PC-3 (cell line): ENCODE measurements at regions of chr20 and their contacts with region 1.

Region 1: DNA sequence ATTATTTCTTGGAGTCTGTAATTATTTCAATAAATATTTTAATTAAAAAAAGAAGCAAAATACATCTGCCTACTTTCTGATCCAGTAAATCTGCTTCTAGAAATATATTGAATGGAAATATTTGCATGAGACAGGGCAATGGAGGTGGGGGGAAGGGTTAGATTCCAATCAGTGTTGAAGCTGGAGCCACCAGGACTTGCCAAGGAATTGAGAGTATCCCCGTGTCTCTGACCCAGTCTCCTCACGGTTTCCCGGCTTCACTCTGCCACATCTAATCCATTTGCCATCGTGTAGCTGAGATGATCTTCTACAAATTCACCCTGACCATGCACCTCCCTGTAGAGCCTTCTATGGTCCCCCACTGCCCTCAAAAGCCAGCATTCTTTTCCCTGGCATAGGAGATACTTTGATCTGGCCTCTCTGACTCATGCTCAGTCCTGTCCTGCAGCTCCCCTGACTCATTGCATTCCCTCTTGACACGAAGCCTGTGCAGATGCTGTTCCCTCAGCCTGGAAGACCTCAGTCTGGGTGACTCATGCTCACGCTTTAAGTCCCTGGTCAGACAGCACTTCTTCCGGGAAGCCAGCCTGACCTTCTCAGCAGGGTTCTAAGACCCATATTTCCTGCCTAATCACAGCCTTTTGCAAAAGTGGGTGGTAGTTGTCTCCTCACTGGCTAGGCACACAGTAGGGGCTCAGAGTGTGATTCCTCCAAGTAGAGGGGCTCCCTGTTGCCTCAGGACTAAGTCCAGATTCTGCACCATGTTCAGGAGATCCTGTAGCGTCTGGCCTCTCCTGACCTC is 23.0 kb upstream of the FKBP1A start:
- DNase-seq: peak; percentile 99
- ATAC-seq: peak; percentile 83
- H3K4me3 ChIP-seq: peak overlapping the region; percentile 55; the same call in 1 of the 2 replicates
- H3K27ac ChIP-seq: peak overlapping the region; percentile 81
- H3K4me1 ChIP-seq: peaks cover 54% of the 10 kb centered on the region
- H3K27me3 ChIP-seq: no peaks in the 10 kb centered on the region
- CTCF ChIP-seq: no peak

Region 2: DNA sequence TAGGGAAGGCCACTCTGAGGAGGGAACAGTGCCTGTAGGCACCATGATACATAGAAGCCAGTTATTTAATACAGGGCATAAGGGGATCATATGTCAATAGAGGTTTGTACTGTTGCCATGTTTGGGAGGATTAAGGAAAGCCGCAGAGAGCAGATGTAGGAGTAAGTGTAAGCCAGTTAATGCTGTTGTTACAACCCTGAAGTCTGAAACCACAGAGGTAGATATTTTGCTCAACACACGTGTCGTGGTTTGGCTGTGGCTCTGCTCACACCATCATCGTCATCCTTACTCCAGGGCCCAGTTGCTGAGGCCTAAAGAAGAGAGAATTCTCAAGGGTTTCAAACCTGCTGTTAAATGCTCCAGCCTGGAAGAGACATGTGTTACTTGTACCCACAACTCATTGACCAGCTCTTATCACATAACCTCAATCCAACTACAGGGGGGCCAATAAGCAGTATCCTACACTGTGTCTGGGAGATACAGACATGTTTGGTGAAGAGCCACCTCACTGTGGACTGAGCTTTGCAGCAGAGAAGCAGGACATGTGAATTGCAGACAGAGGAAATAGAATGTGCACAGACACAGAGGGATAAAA is 328.5 kb before region 1 on chr20:
- CTCF ChIA-PET with region 1: no interaction called
- POLR2A ChIA-PET with region 1: no interaction called
- intact Hi-C with region 1: no loop called
- DNase-seq: no peak
- ATAC-seq: no peak
- H3K4me3 ChIP-seq: no peak overlapping the region
- H3K27ac ChIP-seq: no peak overlapping the region
- H3K4me1 ChIP-seq: no peaks in the 10 kb centered on the region
- H3K27me3 ChIP-seq: no peaks in the 10 kb centered on the region
- CTCF ChIP-seq: no peak

Region 3: GRCh38 chr20:1381753-1382591 is 33.9 kb before region 1 on chr20:
- CTCF ChIA-PET with region 1: no interaction called
- POLR2A ChIA-PET with region 1: no interaction called
- intact Hi-C with region 1: loop called (anchors 5 kb)
- DNase-seq: no peak
- ATAC-seq: no peak
- H3K4me3 ChIP-seq: no peak overlapping the region
- H3K27ac ChIP-seq: 0 out of 2 replicates have a peak overlapping the region, but pooled peaks have one; percentile 1
- H3K4me1 ChIP-seq: peaks cover 82% of the 10 kb centered on the region
- H3K27me3 ChIP-seq: no peaks in the 10 kb centered on the region
- CTCF ChIP-seq: no peak

Region 4: DNA sequence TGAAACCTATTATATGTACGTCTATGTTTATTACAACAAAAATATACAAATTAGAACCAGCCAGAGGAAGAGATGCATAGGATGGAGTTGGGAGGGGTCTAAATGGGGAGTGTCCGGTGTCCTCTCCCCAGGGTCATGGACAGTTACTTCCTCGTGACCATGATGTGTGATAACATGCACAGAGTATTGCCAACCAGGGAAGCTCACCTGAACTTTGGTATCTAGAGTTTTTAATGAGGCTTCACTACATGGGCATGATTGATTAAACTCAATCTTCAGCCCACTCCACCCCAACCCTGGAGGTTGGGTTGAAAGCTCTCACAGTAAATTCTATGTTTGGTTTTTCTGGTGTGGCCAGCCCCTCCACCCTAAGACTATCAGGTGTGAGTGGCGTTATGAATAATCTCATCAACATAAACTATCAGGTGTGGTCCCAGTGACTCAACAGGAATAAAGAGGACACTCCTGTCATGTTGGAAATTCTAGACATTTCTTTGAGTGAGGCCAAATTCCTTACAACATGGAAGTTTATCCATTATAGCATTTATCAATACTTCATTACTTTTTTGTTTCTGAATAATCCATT is 13.4 kb after region 1 on chr20:
- CTCF ChIA-PET with region 1: interaction called, 3 read pairs
- POLR2A ChIA-PET with region 1: no interaction called
- intact Hi-C with region 1: loop called (anchors 1 kb)
- DNase-seq: peak; percentile 55
- ATAC-seq: peak; percentile 69
- H3K4me3 ChIP-seq: no peak overlapping the region
- H3K27ac ChIP-seq: peak overlapping the region; percentile 15; the same call in 1 of the 2 replicates
- H3K4me1 ChIP-seq: peaks cover 21% of the 10 kb centered on the region
- H3K27me3 ChIP-seq: no peaks in the 10 kb centered on the region
- CTCF ChIP-seq: no peak

Region 5: DNA sequence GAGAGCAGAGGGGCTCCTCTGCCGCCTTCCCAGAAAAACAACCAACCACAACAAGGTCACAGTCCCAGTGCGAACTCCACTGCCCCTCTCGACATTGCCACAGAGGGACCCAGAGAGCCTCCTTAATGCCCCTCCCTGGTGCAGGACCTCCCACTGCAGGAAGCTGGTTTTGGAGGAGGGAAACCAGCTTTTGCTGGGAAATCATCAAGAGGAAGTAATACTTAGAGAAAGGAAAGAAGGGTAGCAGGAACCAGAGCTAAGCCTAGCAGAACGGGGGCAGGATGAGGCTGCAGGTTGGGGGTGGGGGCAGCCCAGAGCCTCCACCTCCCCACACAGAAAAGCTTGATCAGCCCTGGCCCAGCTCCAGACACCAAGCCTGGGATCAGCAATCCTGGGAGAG is 441.6 kb after region 1 on chr20:
- CTCF ChIA-PET with region 1: no interaction called
- POLR2A ChIA-PET with region 1: no interaction called
- intact Hi-C with region 1: no loop called
- DNase-seq: no peak
- ATAC-seq: no peak
- H3K4me3 ChIP-seq: no peak overlapping the region
- H3K27ac ChIP-seq: no peak overlapping the region
- H3K4me1 ChIP-seq: no peaks in the 10 kb centered on the region
- H3K27me3 ChIP-seq: peaks cover 34% of the 10 kb centered on the region; the same call in 1 of the 2 replicates
- CTCF ChIP-seq: no peak

Region 6: GRCh38 chr20:2217857-2218539 is 802.1 kb after region 1 on chr20:
- CTCF ChIA-PET with region 1: no interaction called
- POLR2A ChIA-PET with region 1: no interaction called
- intact Hi-C with region 1: no loop called
- DNase-seq: no peak
- ATAC-seq: no peak
- H3K4me3 ChIP-seq: no peak overlapping the region
- H3K27ac ChIP-seq: no peak overlapping the region
- H3K4me1 ChIP-seq: no peaks in the 10 kb centered on the region
- H3K27me3 ChIP-seq: peaks cover 66% of the 10 kb centered on the region
- CTCF ChIP-seq: no peak